Caco-2 (cell line): ENCODE measurements at regions of chr16 and their contacts with region 1.

Region 1: DNA sequence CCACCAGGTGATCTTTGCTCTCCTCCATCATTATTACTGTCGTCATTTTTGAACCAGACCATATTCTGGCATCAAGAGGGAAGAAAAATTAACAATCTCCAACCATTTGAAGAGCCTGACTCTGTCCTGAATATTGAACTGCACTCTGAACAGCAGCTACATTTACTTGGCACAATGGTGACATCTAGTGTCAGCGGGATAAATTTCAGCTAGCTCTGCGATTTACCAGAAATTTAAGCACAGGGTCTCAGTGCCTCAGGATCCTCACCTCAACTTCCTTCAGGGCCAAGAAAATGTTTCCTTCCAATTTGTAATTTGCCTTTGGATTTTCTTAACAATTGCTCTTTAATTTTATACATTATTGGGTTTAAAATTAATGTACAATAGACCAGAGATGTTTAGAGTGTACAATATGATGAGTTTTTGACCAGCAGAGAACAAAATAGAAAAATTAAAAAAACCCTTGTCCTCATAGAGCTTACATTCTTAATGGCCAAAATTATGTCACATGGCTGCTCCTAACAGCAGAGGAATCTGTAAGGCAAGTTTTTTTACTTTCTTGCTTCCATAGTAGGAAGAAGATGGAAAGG is 10.7 kb upstream of the ZNF19 start:
- DNase-seq: peak; percentile 48 to 70
- H3K4me3 ChIP-seq: no peak overlapping the region
- H3K4me3 Mint-ChIP-seq: no peak overlapping the region
- H3K27ac Mint-ChIP-seq: no peak overlapping the region
- H3K4me1 ChIP-seq: no peaks in the 10 kb centered on the region
- H3K4me1 Mint-ChIP-seq: no peaks in the 10 kb centered on the region
- H3K27me3 ChIP-seq: no peaks in the 10 kb centered on the region
- H3K27me3 Mint-ChIP-seq: peaks cover 8% of the 10 kb centered on the region
- CTCF ChIP-seq: peak; percentile 76

Region 2: DNA sequence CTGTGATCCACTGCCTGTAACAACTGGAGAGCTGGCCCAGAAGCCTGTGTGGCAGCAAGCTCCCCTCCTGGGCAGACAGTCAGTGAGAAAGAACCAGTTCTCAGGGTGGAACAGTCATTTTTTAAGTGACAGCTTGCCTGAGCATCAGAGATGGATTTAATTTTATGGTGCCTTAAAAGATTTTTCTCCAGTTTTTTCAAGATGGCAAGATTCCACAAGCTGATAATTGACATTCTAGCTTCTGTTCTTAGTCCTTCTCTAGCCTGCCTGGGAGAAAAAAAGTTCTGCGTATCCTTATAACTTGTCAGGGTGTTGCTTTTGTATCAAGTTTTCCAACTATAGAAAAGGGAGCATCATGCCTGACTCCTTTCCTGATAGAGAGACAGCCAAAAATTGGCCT is 120.2 kb before region 1 on chr16:
- CTCF ChIA-PET with region 1: interaction called, 10 read pairs
- POLR2A ChIA-PET with region 1: no interaction called
- intact Hi-C with region 1: no loop called
- DNase-seq: no peak
- H3K4me3 ChIP-seq: no peak overlapping the region
- H3K4me3 Mint-ChIP-seq: no peak overlapping the region
- H3K27ac Mint-ChIP-seq: no peak overlapping the region
- H3K4me1 ChIP-seq: no peaks in the 10 kb centered on the region
- H3K4me1 Mint-ChIP-seq: no peaks in the 10 kb centered on the region
- H3K27me3 ChIP-seq: no peaks in the 10 kb centered on the region
- H3K27me3 Mint-ChIP-seq: peaks cover 32% of the 10 kb centered on the region
- CTCF ChIP-seq: no peak

Region 3: GRCh38 chr16:71412270-71413160 is 87.4 kb before region 1 on chr16:
- CTCF ChIA-PET with region 1: interaction called, 46 read pairs
- POLR2A ChIA-PET with region 1: no interaction called
- intact Hi-C with region 1: loop called (anchors 1 kb)
- DNase-seq: peak; percentile 74 to 81
- H3K4me3 ChIP-seq: no peak overlapping the region
- H3K4me3 Mint-ChIP-seq: no peak overlapping the region
- H3K27ac Mint-ChIP-seq: no peak overlapping the region
- H3K4me1 ChIP-seq: peaks cover 9% of the 10 kb centered on the region; the same call in 1 of the 2 replicates
- H3K4me1 Mint-ChIP-seq: no peaks in the 10 kb centered on the region
- H3K27me3 ChIP-seq: no peaks in the 10 kb centered on the region; the same call in 1 of the 2 replicates
- H3K27me3 Mint-ChIP-seq: peaks cover 36% of the 10 kb centered on the region
- CTCF ChIP-seq: peak; percentile 84 to 92

Region 4: DNA sequence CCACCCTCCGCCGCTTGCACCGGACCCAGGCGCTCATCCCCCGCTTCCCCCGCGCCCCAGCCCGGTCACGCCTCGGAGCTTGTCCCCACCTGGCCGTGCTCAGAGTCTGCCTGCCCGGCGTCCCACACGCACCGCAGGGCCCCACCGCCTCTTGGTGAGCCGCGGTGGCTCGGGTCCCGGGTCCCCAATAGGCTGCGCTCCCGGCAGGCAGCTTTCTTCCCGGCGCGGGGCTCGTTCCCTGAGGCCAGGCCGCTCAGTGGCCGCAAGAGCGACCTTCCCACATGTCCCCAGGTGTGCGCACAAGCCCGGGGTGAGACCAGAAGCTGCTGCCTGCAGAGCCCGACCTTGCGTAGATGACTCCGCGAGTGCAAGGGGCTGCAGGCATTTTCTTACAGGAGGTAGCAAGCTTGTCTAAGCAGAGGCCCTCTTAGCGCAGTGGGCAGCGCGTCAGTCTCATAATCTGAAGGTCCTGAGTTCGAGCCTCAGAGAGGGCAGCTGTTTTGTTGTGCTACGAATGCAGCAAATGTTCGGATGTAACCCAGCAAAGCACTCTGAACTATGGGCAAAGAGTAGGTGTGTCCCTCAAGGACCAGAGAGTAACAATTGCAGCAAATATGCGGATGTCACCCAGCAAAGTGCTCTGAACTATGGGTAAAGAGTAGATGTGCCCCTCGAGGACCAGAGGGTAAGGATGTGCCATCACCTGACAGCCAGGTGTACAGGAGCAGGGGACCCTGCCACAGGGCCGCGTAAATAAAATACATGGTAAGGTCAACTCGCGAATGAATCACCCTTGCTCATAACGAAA is 73.6 kb before region 1 on chr16:
- CTCF ChIA-PET with region 1: no interaction called
- POLR2A ChIA-PET with region 1: no interaction called
- intact Hi-C with region 1: no loop called
- DNase-seq: no peak
- H3K4me3 ChIP-seq: no peak overlapping the region
- H3K4me3 Mint-ChIP-seq: no peak overlapping the region
- H3K27ac Mint-ChIP-seq: no peak overlapping the region
- H3K4me1 ChIP-seq: no peaks in the 10 kb centered on the region
- H3K4me1 Mint-ChIP-seq: no peaks in the 10 kb centered on the region
- H3K27me3 ChIP-seq: peaks cover 1% of the 10 kb centered on the region
- H3K27me3 Mint-ChIP-seq: peaks cover 23% of the 10 kb centered on the region
- CTCF ChIP-seq: no peak

Region 5: GRCh38 chr16:71484006-71484893 is 15.6 kb before region 1 on chr16:
- CTCF ChIA-PET with region 1: interaction called, 11 read pairs
- POLR2A ChIA-PET with region 1: no interaction called
- intact Hi-C with region 1: no loop called
- DNase-seq: peak; percentile 78 to 85
- H3K4me3 ChIP-seq: peak overlapping the region; percentile 65
- H3K4me3 Mint-ChIP-seq: peak overlapping the region; percentile 76
- H3K27ac Mint-ChIP-seq: peak overlapping the region; percentile 36
- H3K4me1 ChIP-seq: no peaks in the 10 kb centered on the region
- H3K4me1 Mint-ChIP-seq: no peaks in the 10 kb centered on the region
- H3K27me3 ChIP-seq: no peaks in the 10 kb centered on the region
- H3K27me3 Mint-ChIP-seq: no peaks in the 10 kb centered on the region
- CTCF ChIP-seq: no peak

Region 6: DNA sequence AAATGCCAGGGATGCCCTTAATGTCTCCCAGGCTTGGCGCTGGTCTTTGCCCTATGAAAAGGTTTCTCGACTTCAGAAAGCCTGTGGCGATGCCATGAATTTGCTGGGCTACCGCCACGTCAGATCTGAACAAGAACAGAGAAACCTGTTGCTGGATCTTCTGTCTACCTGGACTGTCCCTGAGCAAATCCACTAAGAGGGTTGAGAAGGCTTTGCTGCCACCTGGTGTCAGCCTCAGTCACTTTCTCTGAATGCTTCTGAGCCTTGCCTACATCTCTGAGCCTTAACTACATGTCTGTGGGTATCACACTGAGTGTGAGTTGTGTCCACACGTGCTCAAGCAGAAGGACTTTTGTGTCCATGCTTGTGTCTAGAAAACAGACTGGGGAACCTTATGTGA is 37.8 kb after region 1 on chr16:
- CTCF ChIA-PET with region 1: interaction called, 4 read pairs
- POLR2A ChIA-PET with region 1: no interaction called
- intact Hi-C with region 1: loop called (anchors 2 kb)
- DNase-seq: peak; percentile 62 to 71
- H3K4me3 ChIP-seq: no peak overlapping the region
- H3K4me3 Mint-ChIP-seq: no peak overlapping the region
- H3K27ac Mint-ChIP-seq: no peak overlapping the region
- H3K4me1 ChIP-seq: no peaks in the 10 kb centered on the region
- H3K4me1 Mint-ChIP-seq: no peaks in the 10 kb centered on the region
- H3K27me3 ChIP-seq: no peaks in the 10 kb centered on the region
- H3K27me3 Mint-ChIP-seq: peaks cover 14% of the 10 kb centered on the region
- CTCF ChIP-seq: peak; percentile 53 to 88